ENCODE measurements at regions of chr17 and their contacts with region 1.

Region 1: GRCh38 chr17:46193626-46194392 is 580 bp upstream of the KANSL1 start:
- DNase-seq: peak; percentile 84 to 95
- ATAC-seq: peak; percentile 67 to 86 (median 73)
- H3K4me3 ChIP-seq: peak overlapping the region; percentile 98
- H3K4me3 Mint-ChIP-seq: peak overlapping the region; percentile 84
- H3K27ac ChIP-seq: peak overlapping the region; percentile 100
- H3K27ac Mint-ChIP-seq: peak overlapping the region; percentile 95 to 99
- H3K4me1 ChIP-seq: peaks cover 23% of the 10 kb centered on the region
- H3K4me1 Mint-ChIP-seq: peaks cover 48 to 50% of the 10 kb centered on the region in 2 donors
- H3K27me3 ChIP-seq: no peaks in the 10 kb centered on the region
- H3K27me3 Mint-ChIP-seq: no peaks in the 10 kb centered on the region
- CTCF ChIP-seq: peak; percentile 17

Region 2: GRCh38 chr17:46020023-46020761 is 173.6 kb before region 1 on chr17:
- intact Hi-C with region 1: loop called (anchors 1 kb)
- DNase-seq: peak; percentile 77 to 86
- ATAC-seq: peak; percentile 92 to 97 (median 95)
- H3K4me3 ChIP-seq: no peak overlapping the region
- H3K4me3 Mint-ChIP-seq: peak overlapping the region; percentile 74
- H3K27ac ChIP-seq: peak overlapping the region; percentile 94
- H3K27ac Mint-ChIP-seq: peak overlapping the region; percentile 93 to 99
- H3K4me1 ChIP-seq: peaks cover 52% of the 10 kb centered on the region
- H3K4me1 Mint-ChIP-seq: peaks cover 43 to 50% of the 10 kb centered on the region in 2 donors
- H3K27me3 ChIP-seq: no peaks in the 10 kb centered on the region
- H3K27me3 Mint-ChIP-seq: no peaks in the 10 kb centered on the region
- CTCF ChIP-seq: no peak

Region 3: DNA sequence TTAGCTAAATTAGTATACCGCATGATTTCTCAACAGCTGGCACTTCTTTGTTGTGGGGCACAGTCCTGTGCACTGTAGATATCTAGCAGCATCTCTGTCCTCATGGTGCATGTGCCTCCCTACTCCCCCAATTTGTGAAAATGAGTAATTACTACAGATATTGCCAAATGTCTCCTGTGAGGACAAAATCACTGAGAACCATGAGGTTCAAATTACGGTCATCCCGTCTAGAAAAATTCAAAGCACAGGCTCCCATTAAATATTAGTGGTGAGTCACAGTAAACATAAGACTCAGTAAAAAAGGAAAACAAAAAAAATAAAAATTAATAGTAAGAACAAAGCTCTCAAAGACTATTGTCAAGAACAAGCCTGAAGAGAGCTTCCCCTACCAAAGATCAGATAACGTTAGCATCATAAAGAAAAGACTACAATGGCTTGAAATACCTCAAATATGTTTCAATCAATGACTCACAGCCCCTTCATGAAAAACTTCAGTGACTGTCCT is 137.0 kb before region 1 on chr17:
- intact Hi-C with region 1: no loop called
- DNase-seq: no peak
- ATAC-seq: peak in 1 of 3 donors; percentile 21
- H3K4me3 ChIP-seq: no peak overlapping the region
- H3K4me3 Mint-ChIP-seq: no peak overlapping the region
- H3K27ac ChIP-seq: no peak overlapping the region
- H3K27ac Mint-ChIP-seq: peak overlapping the region; percentile 27 to 37
- H3K4me1 ChIP-seq: no peaks in the 10 kb centered on the region
- H3K4me1 Mint-ChIP-seq: peaks cover 30 to 42% of the 10 kb centered on the region in 2 donors
- H3K27me3 ChIP-seq: no peaks in the 10 kb centered on the region
- H3K27me3 Mint-ChIP-seq: no peaks in the 10 kb centered on the region
- CTCF ChIP-seq: no peak

Region 4: GRCh38 chr17:46139432-46140210 is 54.2 kb before region 1 on chr17:
- intact Hi-C with region 1: loop called (anchors 5 kb)
- DNase-seq: no peak
- ATAC-seq: no peak
- H3K4me3 ChIP-seq: no peak overlapping the region
- H3K4me3 Mint-ChIP-seq: peak overlapping the region; percentile 26
- H3K27ac ChIP-seq: no peak overlapping the region
- H3K27ac Mint-ChIP-seq: peak overlapping the region; percentile 32 to 71
- H3K4me1 ChIP-seq: peaks cover 11% of the 10 kb centered on the region
- H3K4me1 Mint-ChIP-seq: peaks cover 82 to 92% of the 10 kb centered on the region in 2 donors
- H3K27me3 ChIP-seq: no peaks in the 10 kb centered on the region
- H3K27me3 Mint-ChIP-seq: no peaks in the 10 kb centered on the region
- CTCF ChIP-seq: no peak

Region 5: GRCh38 chr17:46212634-46213435 is 19.0 kb after region 1 on chr17:
- intact Hi-C with region 1: loop called (anchors 1 kb)
- DNase-seq: peak; percentile 38 to 91
- ATAC-seq: peak; percentile 84 to 98 (median 94)
- H3K4me3 ChIP-seq: no peak overlapping the region
- H3K4me3 Mint-ChIP-seq: peak overlapping the region; percentile 79
- H3K27ac ChIP-seq: peak overlapping the region; percentile 51
- H3K27ac Mint-ChIP-seq: peak overlapping the region; percentile 79 to 90
- H3K4me1 ChIP-seq: no peaks in the 10 kb centered on the region
- H3K4me1 Mint-ChIP-seq: peaks cover 14 to 18% of the 10 kb centered on the region in 2 donors
- H3K27me3 ChIP-seq: no peaks in the 10 kb centered on the region
- H3K27me3 Mint-ChIP-seq: no peaks in the 10 kb centered on the region
- CTCF ChIP-seq: peak; percentile 75